ENCODE measurements at regions of chr14 and their contacts with region 1.

Region 1: DNA sequence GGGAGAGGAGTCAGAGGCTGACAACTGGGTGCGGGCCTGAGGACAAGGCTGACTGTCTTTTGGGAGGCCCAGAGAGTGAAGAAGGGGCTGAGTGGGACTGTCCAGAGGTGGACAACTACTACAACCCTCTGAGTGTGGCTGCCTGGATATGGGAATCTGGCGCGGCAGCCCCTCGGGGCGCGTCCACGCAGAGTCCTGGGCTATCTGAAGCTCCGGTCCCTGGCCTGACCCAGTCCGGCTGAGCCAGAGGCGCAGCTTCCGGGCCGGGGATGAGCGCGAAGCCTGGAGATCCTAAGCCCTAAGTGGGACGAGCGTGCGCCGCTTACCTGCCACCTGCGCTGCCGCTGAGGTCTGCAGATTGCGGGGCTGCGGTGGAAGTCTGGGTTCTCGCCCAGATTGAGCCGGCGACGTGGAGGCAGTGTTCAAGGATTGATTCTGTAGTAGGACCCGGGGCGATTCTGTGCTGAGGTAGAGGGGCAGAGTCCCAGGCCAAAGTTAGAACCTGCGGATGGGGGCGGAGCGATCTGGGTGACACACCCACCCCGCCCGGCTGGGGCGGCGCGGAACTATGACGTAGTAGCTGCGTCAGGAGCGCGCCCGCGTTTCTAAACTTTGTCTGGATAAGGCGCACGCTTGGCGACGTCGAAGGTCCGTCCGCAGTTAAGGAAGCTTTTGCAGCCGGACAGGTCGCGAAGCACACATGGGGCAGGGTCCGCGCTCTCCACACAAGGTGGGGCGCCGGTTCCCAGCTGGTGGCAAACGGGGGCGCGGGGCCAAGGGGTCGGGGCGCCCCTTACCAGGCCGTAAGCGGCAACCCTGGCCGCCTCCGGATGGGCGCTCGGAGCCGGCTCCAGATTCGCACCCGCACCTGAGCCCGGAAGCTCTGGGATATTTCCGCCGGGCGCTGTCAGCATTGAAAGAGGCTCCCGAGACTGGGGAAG is at the starts of genes DHRS1 and NOP9:
- DNase-seq: peak; percentile 89 to 92
- H3K4me3 ChIP-seq: peak within 1 kb of the TSS; percentile 90 to 93
- H3K27ac ChIP-seq: peak within 1 kb of the TSS; percentile 77 to 85
- H3K4me1 ChIP-seq: no peaks in the 10 kb centered on the region
- H3K27me3 ChIP-seq: no peaks in the 10 kb centered on the region
- CTCF ChIP-seq: peak in 2 of 4 experiments; percentile 17 to 21
- POLR2A ChIP-seq: peak; percentile 35 to 62
- total RNA-seq, gene DHRS1: 17.0 to 52.4 (median 37.7) TPM
- total RNA-seq, gene NOP9: 5.0 to 23.5 (median 22.5) TPM

Region 2: DNA sequence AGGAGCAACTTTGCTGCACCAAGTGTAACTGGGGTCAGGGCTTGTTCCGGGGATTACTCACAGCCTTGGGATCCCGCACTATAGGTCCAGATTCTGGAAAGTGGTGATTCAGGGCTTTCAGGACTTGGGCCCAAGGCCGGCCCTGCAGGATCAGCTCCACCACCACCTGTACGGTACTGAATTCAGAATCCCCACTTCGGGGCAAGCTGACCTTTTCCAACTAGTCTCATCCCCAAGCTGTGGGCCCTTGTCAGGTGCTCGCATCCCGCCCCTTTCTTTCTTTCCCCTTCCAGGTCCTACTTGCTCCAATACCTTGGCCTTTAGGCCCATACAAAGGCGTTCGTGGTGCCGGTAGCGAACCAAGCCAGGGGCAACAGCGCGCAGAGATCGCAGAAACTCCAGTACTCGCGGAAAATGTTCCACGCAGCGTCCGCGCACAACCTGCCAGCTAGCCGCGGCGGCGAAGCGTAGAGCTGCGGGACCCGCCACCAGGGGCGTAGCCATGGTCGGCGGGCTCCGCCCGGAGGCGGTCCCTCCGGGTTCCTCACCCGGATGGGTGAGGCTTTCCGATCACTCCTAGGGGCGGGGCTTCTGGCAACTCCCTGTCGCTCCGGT is 57.6 kb before region 1 on chr14:
- intact Hi-C with region 1: loop called (anchors 10 kb)
- DNase-seq: peak; percentile 92 to 93
- H3K4me3 ChIP-seq: peak overlapping the region; percentile 51 to 62
- H3K27ac ChIP-seq: peak overlapping the region; percentile 94 to 97
- H3K4me1 ChIP-seq: peaks cover 0 to 21% of the 10 kb centered on the region in 2 donors
- H3K27me3 ChIP-seq: no peaks in the 10 kb centered on the region
- CTCF ChIP-seq: peak; percentile 56 to 85 (median 74)
- POLR2A ChIP-seq: no peak